Right ventricle myocardium superior (tissue), 1 donor: ENCODE measurements at regions of chr9 and their contacts with region 1.

Region 1: DNA sequence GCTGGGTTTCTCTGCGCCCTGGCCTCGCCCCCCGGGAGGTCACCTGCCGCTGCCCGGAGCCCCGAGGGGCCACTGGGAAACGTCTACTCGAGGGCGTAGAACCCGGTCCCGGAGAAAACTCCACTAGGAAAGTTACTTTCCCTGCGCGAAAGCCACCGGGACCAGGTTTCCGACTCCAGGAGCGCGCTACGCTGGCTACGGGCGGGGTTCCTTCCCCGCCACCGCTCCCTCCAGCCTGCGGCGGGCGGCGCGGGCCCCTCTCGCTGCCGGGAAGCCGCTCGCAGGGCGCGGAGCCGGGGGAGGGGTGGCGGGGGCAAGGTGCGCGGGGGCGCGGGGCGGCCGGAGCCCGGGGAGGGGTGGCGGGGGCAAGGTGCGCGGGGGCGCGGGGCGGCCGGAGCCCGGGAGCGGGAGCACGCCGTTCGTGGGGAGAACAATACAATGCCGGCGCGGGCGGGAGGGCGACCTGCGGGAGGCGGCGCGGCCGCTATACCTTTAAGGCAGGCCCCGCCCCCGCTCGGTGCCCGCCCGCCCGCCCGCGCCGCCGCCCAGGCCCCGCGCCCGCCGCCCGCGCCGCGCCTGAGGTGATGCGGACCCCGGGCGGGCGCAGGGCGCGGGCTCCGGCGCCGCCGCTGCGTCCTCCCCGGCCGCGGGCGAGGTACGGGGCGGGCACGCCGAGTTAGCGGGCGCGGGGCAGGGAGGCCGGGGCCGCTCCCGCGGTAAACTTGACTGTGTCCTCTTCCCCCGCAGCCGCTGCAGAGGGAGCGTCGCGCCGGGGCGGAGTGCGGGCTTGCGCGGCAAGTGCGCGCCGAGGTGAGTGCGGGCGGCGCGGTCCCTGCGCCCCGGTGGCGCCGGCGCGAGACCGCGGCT is 278.1 kb downstream of the AOPEP start:
- DNase-seq: peak; percentile 75
- ATAC-seq: peak; percentile 58

Region 2: GRCh38 chr9:94867281-94867841 is 137.3 kb before region 1 on chr9:
- intact Hi-C with region 1: loop called (anchors 5 kb)
- DNase-seq: peak; percentile 78
- ATAC-seq: peak; percentile 87

Region 3: GRCh38 chr9:94882966-94883641 is 121.5 kb before region 1 on chr9:
- intact Hi-C with region 1: loop called (anchors 5 kb)
- DNase-seq: no peak
- ATAC-seq: peak; percentile 63